Posterior cingulate gyrus (tissue), 11 donors: ENCODE measurements at regions of chr6 and their contacts with region 1.

Region 1: DNA sequence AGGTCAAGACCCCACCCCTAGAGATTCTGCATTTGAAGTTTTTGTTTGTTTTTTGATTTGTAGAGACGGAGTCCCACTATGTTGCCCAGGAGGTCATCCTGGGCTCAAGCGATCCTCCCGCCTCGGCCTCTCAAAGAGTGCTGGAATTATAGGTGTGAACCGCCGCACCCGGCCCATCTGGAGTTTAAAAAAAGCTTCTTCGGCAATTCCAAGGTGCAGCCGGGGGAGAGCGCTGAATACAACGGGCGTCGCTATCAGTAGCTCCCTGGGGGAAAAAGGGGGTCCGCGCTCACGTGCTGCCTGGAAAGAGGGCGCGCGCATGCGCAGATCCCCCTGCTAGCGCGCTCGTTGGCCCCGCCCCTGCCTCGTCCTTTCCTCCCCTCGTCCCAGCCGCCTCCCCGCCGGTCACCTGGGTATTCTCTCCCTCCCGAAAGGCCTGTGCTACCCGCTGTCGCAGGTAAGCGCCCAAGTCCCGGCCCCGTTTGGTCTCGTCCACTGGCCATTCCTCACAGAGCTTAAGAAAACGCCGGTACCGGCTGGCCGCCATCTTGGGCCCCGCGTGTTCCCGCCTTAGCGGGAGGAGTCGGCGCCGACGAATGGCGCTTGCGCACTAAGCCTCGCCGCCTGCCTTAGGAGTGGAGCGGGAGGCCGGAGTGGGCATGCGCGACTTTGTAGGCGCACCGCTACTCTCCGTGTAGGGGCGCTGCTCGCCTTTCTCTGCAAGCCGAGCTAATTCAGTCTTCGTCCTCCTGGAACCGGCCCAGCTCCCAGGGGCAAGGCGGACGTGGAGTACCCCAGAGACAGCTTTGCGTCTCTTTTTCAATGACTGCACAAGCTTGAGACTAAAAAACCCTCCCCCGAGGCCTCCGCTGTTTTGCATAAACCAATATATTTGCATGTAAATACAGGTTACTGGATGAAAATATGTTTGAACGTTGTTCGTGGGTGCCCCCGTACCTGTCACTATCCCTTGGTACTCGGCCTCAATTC is at the start of gene UQCC2:
- DNase-seq: peak; percentile 93 to 99 (median 96)

Region 2: GRCh38 chr6:33761922-33762629 is 50.6 kb after region 1 on chr6:
- intact Hi-C with region 1: loop called (anchors 5 kb)
- DNase-seq: peak in 9 of 10 donors; percentile 46 to 94 (median 75)

Region 3: DNA sequence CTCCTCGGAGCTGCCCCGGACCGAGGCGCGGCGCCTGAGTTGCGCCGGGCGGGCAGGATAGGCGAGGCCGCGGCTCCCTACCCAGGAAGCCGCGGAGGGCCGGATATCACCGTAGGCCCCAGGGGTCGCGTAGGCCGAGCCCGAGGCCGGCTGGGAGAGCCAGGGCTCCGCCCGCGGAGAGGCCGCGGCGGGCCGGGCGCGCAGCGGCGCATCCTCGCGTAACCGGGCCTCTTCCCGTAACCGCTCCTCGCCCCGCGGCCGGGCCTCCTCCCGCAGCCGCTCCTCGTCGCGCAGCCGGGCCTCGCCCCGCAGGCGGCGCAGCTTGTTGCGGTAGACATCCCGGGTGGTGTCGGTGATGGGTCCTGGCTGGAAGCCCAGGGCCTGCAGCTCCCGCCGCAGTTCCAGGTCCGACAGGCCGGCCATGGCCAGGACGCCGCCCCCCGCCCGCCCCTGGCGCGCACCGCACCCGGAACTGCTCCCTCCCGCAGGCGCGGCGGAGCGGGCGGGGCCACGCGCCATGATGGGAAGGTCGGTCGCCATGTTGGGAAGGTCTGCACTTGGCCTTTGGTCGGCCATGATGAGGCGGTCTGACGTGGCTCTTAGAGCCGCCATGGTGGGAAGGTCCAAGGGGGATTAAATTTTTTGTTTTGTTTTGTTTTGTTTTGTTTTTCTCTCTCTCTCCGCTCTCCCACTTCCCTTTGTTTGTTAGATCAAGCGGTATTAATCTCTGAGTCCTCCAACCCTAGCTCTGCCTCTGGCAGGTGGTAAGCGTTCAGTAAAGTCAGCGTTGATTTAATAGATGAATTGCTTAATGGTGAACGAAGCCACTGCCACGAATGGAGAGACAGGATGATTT is 77.5 kb after region 1 on chr6 and contains the start of gene LEMD2:
- intact Hi-C with region 1: loop called (anchors 5 kb)
- DNase-seq: peak; percentile 90 to 99 (median 94)

Region 4: GRCh38 chr6:33967966-33968724 is 256.7 kb after region 1 on chr6:
- intact Hi-C with region 1: no loop called
- DNase-seq: no peak